PC-9 (cell line): ENCODE measurements at regions of chr11 and their contacts with region 1.

Region 1: DNA sequence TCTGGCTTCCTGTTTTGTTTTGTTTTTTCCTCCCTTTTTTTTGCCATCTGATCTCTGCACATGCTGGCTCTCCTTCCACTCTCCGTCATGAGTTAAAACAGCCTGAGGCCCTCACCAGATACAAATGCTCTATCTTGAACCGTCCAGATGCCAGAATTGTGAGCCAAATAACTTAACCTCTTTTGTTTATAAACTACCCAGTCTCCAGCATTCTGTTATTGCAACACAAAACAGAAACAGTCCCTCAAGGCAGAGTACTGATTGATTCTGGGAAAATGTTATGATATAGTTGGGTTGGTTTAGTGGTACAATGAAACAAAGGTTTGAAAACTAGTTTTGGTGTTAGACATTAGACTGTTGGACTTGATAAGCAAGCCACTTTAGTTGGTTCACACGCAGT is 1390.0 kb upstream of the RAG2 start:
- DNase-seq: peak; percentile 30 to 68
- H3K4me3 ChIP-seq: no peak overlapping the region
- H3K27ac ChIP-seq: peak overlapping the region; percentile 27; the same call in 1 of the 2 replicates
- H3K4me1 ChIP-seq: 0 out of 2 replicates have a peak, but pooled peaks cover 6% of the 10 kb centered on the region
- H3K27me3 ChIP-seq: no peaks in the 10 kb centered on the region
- CTCF ChIP-seq: no peak

Region 2: GRCh38 chr11:38491986-38492385 is 504.0 kb after region 1 on chr11:
- CTCF ChIA-PET with region 1: no interaction called
- POLR2A ChIA-PET with region 1: interaction called, 17 read pairs
- intact Hi-C with region 1: no loop called
- DNase-seq: no peak
- H3K4me3 ChIP-seq: no peak overlapping the region
- H3K27ac ChIP-seq: no peak overlapping the region
- H3K4me1 ChIP-seq: no peaks in the 10 kb centered on the region
- H3K27me3 ChIP-seq: no peaks in the 10 kb centered on the region
- CTCF ChIP-seq: no peak